Dendritic cell treated with granulocyte-macrophage colony-stimulating factor and Interleukin-4, amounts not matched to agents 40 ng/mL and 50 ng/mL, for 4 days (primary cell): ENCODE measurements at regions of chr21 and their contacts with region 1.

Region 1: DNA sequence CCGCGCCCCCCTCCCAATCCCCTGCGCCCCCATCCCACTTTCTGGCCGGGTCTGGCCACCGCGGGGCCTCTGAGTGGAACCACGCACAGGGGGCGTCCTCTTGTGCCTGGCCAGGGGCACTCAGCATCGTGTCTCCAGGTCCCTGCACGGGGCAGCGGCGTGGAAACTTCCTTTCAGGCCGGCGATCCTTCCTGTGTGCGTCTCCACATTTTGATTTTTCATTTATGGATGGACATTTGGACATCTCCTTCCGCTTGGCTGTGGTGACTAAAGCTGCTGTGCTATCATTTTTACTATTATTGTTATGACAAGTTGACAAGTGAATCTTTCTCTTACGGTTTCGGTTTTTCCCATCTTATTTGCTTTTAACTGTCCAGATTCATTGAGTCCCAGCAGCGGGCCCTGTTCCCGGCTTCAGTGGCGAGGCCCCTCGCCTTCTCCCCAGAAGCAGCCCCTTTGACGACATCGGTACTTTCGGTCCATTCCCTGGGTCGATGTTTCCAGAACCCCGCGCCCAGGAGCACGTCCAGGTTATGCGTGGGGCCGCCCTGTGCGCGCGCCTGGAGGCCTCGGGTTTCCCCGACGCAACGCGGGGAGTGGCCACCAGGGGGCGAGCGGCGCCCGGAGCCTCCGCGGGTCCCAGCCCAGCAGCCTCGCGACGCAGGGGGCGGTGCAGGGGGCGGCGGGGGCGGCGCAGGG is 12.4 kb upstream of the SLC19A1 start:
- H3K4me3 Mint-ChIP-seq: peak overlapping the region; percentile 92
- H3K27ac Mint-ChIP-seq: peak overlapping the region; percentile 95
- H3K4me1 Mint-ChIP-seq: peaks cover 37% of the 10 kb centered on the region
- H3K27me3 Mint-ChIP-seq: peaks cover 16% of the 10 kb centered on the region

Region 2: DNA sequence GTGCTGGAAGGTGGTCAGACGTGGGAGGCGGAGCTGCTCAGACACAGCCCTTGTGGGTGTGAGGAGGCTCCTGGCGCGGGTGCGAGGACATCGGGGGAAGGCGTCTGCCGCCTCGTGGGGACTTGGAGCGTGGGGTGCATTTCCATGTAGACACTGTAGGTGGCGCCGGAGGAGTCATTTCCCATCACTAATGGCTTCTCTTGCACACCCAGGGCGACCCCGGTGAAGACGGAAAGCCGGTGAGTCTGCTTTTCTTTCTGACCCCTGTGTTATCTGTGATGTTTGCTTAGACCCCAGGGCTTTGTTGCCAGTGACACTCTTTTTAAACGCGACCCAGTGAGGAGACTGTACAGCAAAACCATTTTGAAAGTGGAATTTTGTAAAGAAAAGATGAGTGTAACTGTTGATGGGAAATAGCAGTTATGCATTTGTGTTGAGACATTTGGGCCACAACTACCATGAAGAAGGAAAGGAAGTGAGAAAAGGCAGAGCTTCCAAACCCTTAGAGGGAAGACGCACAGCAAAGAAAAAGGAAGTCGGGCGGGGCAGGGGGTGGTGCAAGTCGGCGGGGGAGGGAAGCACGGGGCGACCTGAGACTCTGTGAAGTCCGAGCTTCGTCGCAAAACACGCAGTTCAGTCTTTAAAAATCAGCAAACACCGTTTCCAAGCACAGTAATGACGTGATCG is 76.4 kb before region 1 on chr21:
- intact Hi-C with region 1: loop called (anchors 2 kb)
- H3K4me3 Mint-ChIP-seq: peak overlapping the region; percentile 67
- H3K27ac Mint-ChIP-seq: peak overlapping the region; percentile 88
- H3K4me1 Mint-ChIP-seq: peaks cover 57% of the 10 kb centered on the region
- H3K27me3 Mint-ChIP-seq: peaks cover 5% of the 10 kb centered on the region

Region 3: GRCh38 chr21:45541289-45542039 is 13.2 kb before region 1 on chr21:
- intact Hi-C with region 1: loop called (anchors 1 kb)
- H3K4me3 Mint-ChIP-seq: peak overlapping the region; percentile 74
- H3K27ac Mint-ChIP-seq: peak overlapping the region; percentile 82
- H3K4me1 Mint-ChIP-seq: peaks cover 79% of the 10 kb centered on the region
- H3K27me3 Mint-ChIP-seq: peaks cover 4% of the 10 kb centered on the region

Region 4: DNA sequence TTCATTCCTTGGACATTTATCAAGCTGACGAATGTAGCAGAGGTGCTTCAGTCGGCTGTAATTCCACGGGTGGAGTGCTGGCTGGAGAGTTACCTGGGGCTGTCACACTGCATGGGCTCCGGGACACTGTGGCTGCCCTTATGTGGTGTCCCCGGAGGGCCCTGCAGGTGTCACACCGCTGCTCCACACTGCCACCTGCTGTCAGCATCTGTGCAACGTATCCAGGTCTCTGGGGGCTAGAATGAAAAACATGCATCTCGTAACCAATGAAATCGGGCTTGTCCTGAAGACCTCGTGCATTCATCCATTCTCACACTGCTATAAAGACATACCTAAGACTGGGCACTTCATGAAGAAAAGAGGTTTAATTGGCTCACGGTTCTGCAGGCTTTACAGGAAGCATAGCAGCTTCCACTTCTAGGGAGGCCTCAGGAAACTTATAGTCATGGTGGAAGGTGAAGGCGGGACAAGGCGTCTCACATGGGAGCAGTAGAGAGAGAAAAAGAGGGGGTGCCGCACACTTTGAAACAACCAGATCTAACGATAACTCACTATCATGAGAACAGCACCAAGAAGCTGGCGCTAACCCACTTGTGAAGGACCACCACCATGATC is 42.2 kb after region 1 on chr21:
- intact Hi-C with region 1: loop called (anchors 1 kb)
- H3K4me3 Mint-ChIP-seq: no peak overlapping the region
- H3K27ac Mint-ChIP-seq: no peak overlapping the region
- H3K4me1 Mint-ChIP-seq: peaks cover 9% of the 10 kb centered on the region
- H3K27me3 Mint-ChIP-seq: peaks cover 16% of the 10 kb centered on the region

Region 5: GRCh38 chr21:45643021-45643980 is 88.7 kb after region 1 on chr21 and contains the start of gene PCBP3:
- intact Hi-C with region 1: loop called (anchors 10 kb)
- H3K4me3 Mint-ChIP-seq: peak within 1 kb of the TSS; percentile 71
- H3K27ac Mint-ChIP-seq: no peak within 1 kb of the TSS
- H3K4me1 Mint-ChIP-seq: peaks cover 24% of the 10 kb centered on the region
- H3K27me3 Mint-ChIP-seq: peaks cover 26% of the 10 kb centered on the region

Region 6: DNA sequence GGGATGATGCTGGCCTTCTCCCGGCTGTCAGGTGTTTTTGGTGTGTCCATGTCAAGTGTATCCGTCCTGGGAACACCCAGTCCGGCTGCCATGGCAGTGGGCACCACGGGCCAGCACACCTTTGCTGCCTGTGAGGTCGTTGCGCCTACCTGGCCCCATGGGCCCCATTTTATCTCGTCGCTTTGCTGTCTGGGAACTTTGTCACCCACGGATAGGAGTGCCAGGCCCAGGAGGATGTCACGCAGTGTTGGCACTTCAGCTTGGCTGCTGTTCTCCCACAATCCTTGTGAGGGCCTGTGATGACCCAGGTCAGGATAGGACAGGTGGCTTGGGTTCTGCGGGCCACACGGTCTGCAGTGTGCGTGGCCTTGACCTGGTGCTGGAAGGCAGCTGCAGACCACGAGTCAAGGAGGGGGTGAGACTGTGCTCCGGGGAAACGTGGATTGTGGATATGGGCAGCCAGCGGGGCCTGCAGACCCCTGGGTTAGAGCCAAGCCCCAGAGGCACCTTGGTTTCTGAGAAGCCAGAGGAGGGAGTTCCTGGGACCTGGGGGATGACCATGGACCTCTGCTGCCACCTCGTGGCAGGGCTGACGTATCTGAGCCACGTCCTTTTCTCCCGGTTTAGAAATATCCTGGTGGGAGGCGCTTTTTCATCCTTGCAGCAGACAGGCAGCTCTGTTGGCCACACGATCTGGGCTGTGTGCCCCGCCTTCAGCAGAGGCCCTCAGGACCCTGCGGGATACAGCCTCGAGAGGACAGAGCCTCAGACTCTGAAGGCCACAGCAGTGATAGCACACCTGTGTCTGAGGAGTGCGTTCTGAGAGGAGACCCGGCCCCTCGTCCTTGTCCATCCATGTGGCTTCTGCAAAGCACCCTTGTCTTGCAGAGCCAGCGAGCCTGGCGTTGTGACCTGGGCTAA is 265.8 kb after region 1 on chr21:
- intact Hi-C with region 1: loop called (anchors 2 kb)
- H3K4me3 Mint-ChIP-seq: no peak overlapping the region
- H3K27ac Mint-ChIP-seq: no peak overlapping the region
- H3K4me1 Mint-ChIP-seq: peaks cover 19% of the 10 kb centered on the region
- H3K27me3 Mint-ChIP-seq: no peaks in the 10 kb centered on the region